Heart right ventricle (tissue), 16 donors: ENCODE measurements at regions of chr6 and their contacts with region 1.

Region 1: GRCh38 chr6:90035047-90035723 is 140.9 kb downstream of the GJA10 start:
- DNase-seq: no peak
- ATAC-seq: no peak
- H3K4me3 ChIP-seq: no peak overlapping the region
- H3K27ac ChIP-seq: no peak overlapping the region
- H3K4me1 ChIP-seq: no peaks in the 10 kb centered on the region
- H3K27me3 ChIP-seq: no peaks in the 10 kb centered on the region
- CTCF ChIP-seq: no peak

Region 2: GRCh38 chr6:89873721-89874120 is 161.5 kb before region 1 on chr6:
- intact Hi-C with region 1: no loop called
- DNase-seq: no peak
- ATAC-seq: no peak
- H3K4me3 ChIP-seq: no peak overlapping the region
- H3K27ac ChIP-seq: no peak overlapping the region
- H3K4me1 ChIP-seq: no peaks in the 10 kb centered on the region
- H3K27me3 ChIP-seq: no peaks in the 10 kb centered on the region
- CTCF ChIP-seq: no peak

Region 3: DNA sequence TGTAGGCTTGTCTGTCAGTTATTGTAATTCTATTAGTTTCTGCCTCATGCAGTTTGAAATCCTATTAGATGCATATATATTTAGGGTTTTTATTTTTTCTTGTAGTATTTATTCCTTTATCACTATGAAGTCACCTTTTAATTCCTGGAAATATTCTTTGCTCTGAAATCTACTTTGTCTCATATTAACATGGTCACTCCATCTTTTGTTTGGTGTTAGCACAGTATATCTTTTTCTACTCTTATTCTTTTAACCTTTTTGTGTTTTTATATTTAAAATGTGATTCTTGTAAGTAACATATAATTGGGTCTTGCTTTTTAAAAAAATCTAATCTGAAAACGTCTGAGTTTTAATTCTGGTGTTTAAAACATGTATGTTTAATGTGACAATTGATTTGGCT is 19.3 kb before region 1 on chr6:
- intact Hi-C with region 1: loop called in 1 of 10 experiments (anchors 2 kb)
- DNase-seq: no peak
- ATAC-seq: no peak
- H3K4me3 ChIP-seq: no peak overlapping the region
- H3K27ac ChIP-seq: no peak overlapping the region
- H3K4me1 ChIP-seq: no peaks in the 10 kb centered on the region
- H3K27me3 ChIP-seq: no peaks in the 10 kb centered on the region
- CTCF ChIP-seq: no peak

Region 4: DNA sequence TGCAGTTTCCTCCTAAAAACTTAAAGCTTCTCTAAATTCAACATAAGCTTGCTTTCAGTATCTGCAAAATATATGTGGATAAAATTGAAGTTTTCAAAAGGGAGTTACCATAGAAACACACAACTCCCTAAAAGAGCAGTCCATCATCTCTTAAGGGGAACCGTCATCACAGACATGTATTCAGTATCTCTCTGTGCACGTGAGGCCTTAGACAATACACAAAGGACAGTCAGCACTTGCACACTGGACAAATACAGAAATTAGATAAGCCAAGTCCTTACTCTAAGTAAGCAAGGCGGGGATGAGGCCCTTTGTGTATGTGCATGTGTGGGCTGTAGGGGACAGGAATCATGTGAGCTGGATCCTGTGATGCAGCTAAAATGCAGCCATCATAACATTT is 124.8 kb after region 1 on chr6:
- intact Hi-C with region 1: no loop called
- DNase-seq: no peak
- ATAC-seq: peak in 4 of 8 donors; percentile 55 to 64 (median 56)
- H3K4me3 ChIP-seq: no peak overlapping the region
- H3K27ac ChIP-seq: no peak overlapping the region
- H3K4me1 ChIP-seq: peaks cover 0 to 23% (median 18%) of the 10 kb centered on the region in 9 donors
- H3K27me3 ChIP-seq: no peaks in the 10 kb centered on the region
- CTCF ChIP-seq: no peak